PC-3 (cell line): ENCODE measurements at regions of chr5 and their contacts with region 1.

Region 1: DNA sequence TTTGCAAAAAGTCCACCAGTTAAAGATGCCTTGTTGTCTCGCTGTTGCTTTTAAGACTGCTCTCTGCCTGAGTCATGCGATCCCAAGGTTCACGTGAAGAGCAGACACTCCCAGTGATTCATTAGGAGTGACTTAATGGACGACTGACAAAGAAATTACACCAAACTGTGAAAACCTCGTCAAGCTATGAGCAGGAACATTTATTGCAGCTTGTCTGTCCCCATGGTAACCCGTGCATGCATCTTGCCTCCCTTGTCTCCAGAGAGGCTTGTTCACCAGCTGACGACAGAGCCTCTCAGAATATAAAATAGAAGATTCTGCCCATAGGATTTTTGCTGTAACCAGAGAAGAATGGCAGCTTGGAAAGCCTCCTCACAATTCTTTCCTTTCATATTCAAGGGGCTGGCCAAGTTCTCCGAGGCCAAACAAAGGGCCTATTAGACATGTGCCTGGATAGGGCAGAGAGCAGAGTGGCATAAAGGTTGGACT is 352.7 kb downstream of the SPOCK1 start:
- DNase-seq: peak; percentile 74
- ATAC-seq: peak; percentile 71
- H3K4me3 ChIP-seq: no peak overlapping the region
- H3K27ac ChIP-seq: peak overlapping the region; percentile 54
- H3K4me1 ChIP-seq: peaks cover 52% of the 10 kb centered on the region
- H3K27me3 ChIP-seq: no peaks in the 10 kb centered on the region
- CTCF ChIP-seq: no peak

Region 2: GRCh38 chr5:137075163-137075970 is 71.1 kb before region 1 on chr5:
- CTCF ChIA-PET with region 1: interaction called, 7 read pairs
- POLR2A ChIA-PET with region 1: no interaction called
- intact Hi-C with region 1: loop called (anchors 5 kb)
- DNase-seq: peak; percentile 84
- ATAC-seq: peak; percentile 73
- H3K4me3 ChIP-seq: no peak overlapping the region
- H3K27ac ChIP-seq: no peak overlapping the region
- H3K4me1 ChIP-seq: peaks cover 39% of the 10 kb centered on the region
- H3K27me3 ChIP-seq: no peaks in the 10 kb centered on the region
- CTCF ChIP-seq: peak; percentile 79

Region 3: GRCh38 chr5:137114529-137114928 is 31.9 kb before region 1 on chr5:
- CTCF ChIA-PET with region 1: no interaction called
- POLR2A ChIA-PET with region 1: no interaction called
- intact Hi-C with region 1: no loop called
- DNase-seq: peak; percentile 40
- ATAC-seq: peak; percentile 94
- H3K4me3 ChIP-seq: no peak overlapping the region
- H3K27ac ChIP-seq: no peak overlapping the region
- H3K4me1 ChIP-seq: peaks cover 14% of the 10 kb centered on the region
- H3K27me3 ChIP-seq: no peaks in the 10 kb centered on the region
- CTCF ChIP-seq: no peak

Region 4: GRCh38 chr5:137310051-137310730 is 163.7 kb after region 1 on chr5:
- CTCF ChIA-PET with region 1: no interaction called
- POLR2A ChIA-PET with region 1: no interaction called
- intact Hi-C with region 1: no loop called
- DNase-seq: peak; percentile 90
- ATAC-seq: peak; percentile 87
- H3K4me3 ChIP-seq: peak overlapping the region; percentile 28; the same call in 1 of the 2 replicates
- H3K27ac ChIP-seq: peak overlapping the region; percentile 76
- H3K4me1 ChIP-seq: peaks cover 33% of the 10 kb centered on the region
- H3K27me3 ChIP-seq: no peaks in the 10 kb centered on the region
- CTCF ChIP-seq: no peak